ENCODE measurements at regions of chr6 and their contacts with region 1.

Region 1: DNA sequence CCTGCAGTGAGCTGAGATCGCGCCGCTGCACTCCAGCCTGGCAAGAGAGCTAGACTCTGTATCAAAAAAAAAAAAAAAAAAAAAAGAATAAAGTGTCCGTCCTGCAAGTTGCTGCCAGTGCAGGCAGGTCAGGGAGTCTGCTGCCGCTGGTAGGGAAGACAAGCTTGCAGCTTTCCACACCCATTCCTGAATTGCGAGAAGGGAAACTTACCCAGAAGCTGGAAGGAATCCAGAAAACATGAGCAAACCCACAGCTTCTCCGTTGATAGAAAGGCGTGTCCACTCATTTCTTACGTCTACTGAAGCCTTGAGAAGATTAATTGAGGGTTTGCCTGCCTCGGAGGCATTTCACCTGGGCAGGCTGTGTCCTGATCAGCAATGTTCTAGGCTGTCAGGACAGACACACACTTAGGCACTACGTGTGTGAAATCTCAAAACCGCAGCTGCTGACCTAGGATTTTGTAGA is 61.6 kb upstream of the DSP start:
- DNase-seq: peak; percentile 100
- H3K4me3 ChIP-seq: no peak overlapping the region
- H3K27ac ChIP-seq: peak overlapping the region; percentile 94
- H3K4me1 ChIP-seq: peaks cover 7% of the 10 kb centered on the region
- H3K27me3 ChIP-seq: no peaks in the 10 kb centered on the region
- CTCF ChIP-seq: no peak

Region 2: DNA sequence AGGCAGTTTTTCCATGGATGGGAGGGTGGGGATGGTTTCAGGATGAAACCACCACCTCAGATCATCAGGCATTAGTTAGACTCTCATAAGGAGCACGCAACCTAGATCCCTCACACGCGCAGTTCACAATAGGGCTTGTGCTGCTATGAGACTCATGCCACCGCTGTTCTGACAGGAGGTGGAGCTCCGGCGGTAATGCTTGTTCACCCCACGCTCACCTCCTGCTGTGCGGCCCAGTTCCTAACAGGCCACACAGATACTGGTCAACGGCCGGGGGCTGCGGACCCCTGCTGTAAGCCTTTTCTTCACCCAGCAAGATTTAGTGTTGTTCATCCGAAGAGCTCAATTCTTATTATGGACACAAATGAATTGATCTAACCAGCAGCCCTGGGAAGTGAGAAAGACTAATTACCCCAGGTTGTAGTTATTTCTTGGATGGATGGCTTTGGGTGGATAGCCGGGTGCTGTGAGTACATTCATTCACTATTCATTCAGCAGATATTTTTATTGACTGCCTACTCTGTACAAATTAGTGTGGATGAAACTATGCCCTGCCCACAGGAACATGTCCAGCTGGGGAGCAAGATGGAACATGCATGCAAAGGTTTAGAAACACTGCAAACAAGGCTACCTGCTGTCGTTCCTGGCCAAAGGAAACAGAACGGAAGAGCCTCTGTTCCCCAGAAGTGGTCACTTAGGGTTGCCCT is 33.1 kb before region 1 on chr6:
- CTCF ChIA-PET with region 1: no interaction called
- dilution Hi-C with region 1: no loop called
- in situ Hi-C with region 1: no loop called
- intact Hi-C with region 1: loop called (anchors 2 kb)
- DNase-seq: peak; percentile 94
- H3K4me3 ChIP-seq: peak overlapping the region in 2 of 3 experiments; percentile 19 to 27
- H3K27ac ChIP-seq: peak overlapping the region; percentile 87
- H3K4me1 ChIP-seq: peaks cover 18% of the 10 kb centered on the region
- H3K27me3 ChIP-seq: no peaks in the 10 kb centered on the region
- CTCF ChIP-seq: peak in 1 of 2 donors; percentile 22